ENCODE measurements at regions of chr1 and their contacts with region 1.

Region 1: DNA sequence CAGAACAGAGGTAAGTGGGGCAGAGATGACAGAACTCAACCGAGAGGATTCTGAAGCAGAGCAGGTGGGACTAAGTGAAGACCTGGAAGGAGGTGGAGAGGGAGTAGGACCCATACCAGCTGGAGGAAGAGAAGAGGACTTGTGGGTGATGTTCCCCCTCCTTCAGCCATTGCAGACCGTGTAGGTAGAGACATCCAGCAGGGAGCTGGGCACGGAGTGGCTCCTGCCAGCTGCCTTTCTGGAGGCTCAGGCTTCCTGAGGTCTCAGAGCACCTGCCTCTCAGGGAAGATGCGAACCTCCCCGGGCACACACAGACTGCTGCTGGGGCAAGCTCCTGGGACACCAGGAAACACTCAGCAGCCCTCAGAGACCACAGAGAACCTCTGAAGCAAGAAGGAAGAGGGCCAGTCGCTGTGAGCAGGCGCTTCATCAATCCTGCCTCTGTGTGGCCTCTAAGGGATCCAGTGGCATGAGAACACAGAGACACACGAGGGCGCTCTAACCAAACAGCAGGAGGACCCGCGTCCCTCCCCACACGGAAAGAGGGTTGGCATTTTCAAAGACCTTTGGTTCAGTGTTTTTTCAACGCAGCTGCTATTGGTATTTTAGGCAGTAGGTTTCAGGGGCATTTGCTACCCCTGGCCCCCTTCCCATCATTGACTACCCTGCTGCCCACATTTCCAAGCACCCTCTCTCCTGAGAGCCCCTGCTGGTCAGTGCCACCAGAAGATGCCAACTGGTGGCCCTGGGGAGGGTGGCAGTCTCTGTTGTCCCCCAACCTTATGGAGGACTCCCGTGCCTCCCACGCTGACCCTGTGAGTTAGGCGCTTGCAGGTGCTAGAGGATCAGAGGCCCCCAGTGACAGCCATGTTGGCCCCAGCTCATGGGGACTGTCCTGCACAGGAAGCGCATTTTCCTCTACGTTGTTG is 89.6 kb upstream of the EDN2 start:
- DNase-seq: peak; percentile 91
- H3K4me3 Mint-ChIP-seq: no peak overlapping the region
- H3K27ac Mint-ChIP-seq: no peak overlapping the region
- H3K4me1 Mint-ChIP-seq: peaks cover 31% of the 10 kb centered on the region
- H3K27me3 Mint-ChIP-seq: no peaks in the 10 kb centered on the region

Region 2: GRCh38 chr1:41658431-41659158 is 84.5 kb after region 1 on chr1:
- CTCF ChIA-PET with region 1: interaction called, 17 read pairs
- DNase-seq: peak; percentile 20
- H3K4me3 Mint-ChIP-seq: no peak overlapping the region
- H3K27ac Mint-ChIP-seq: no peak overlapping the region
- H3K4me1 Mint-ChIP-seq: peaks cover 71% of the 10 kb centered on the region
- H3K27me3 Mint-ChIP-seq: no peaks in the 10 kb centered on the region

Region 3: DNA sequence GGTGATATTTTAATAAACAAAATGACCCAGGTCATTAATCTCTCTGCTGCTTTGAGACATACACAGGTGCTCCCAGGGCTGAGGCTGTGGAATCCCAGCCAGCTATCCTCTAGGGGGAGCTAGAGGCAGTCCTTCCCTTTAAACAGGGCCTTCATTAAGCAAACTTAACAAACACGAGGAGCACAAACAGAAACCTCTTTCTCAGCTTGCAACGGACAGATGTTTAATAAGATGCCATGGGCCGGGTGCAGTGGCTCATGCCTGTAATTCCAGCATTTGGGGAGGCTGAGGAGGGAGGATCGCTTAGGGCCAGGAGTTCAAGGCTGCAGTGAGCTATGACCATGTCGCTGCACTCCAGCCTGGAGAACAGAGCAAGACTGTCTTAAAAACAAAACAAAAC is 238.0 kb after region 1 on chr1:
- CTCF ChIA-PET with region 1: interaction called, 12 read pairs
- DNase-seq: peak; percentile 75
- H3K4me3 Mint-ChIP-seq: no peak overlapping the region
- H3K27ac Mint-ChIP-seq: no peak overlapping the region
- H3K4me1 Mint-ChIP-seq: peaks cover 43% of the 10 kb centered on the region
- H3K27me3 Mint-ChIP-seq: peaks cover 4% of the 10 kb centered on the region

Region 4: GRCh38 chr1:41891199-41891896 is 317.3 kb after region 1 on chr1:
- CTCF ChIA-PET with region 1: interaction called, 16 read pairs
- DNase-seq: peak; percentile 79
- H3K4me3 Mint-ChIP-seq: peak overlapping the region; percentile 73
- H3K27ac Mint-ChIP-seq: peak overlapping the region; percentile 93
- H3K4me1 Mint-ChIP-seq: peaks cover 70% of the 10 kb centered on the region
- H3K27me3 Mint-ChIP-seq: no peaks in the 10 kb centered on the region